ENCODE measurements at regions of chr1 and their contacts with region 1.

Region 1: GRCh38 chr1:34597877-34598514 is 156.9 kb upstream of the GJB5 start:
- DNase-seq: peak; percentile 76 to 86
- H3K4me3 ChIP-seq: no peak overlapping the region
- H3K27ac ChIP-seq: no peak overlapping the region
- H3K4me1 ChIP-seq: no peaks in the 10 kb centered on the region
- H3K27me3 ChIP-seq: peaks cover 0 to 43% (median 4%) of the 10 kb centered on the region in 3 donors
- CTCF ChIP-seq: peak in 4 of 7 experiments; percentile 62 to 78 (median 68)
- EP300 ChIP-seq: no peak
- POLR2A ChIP-seq: no peak

Region 2: GRCh38 chr1:33633019-33633801 is 964.8 kb before region 1 on chr1:
- intact Hi-C with region 1: loop called (anchors 5 kb)
- DNase-seq: peak; percentile 94 to 96
- H3K4me3 ChIP-seq: no peak overlapping the region
- H3K27ac ChIP-seq: no peak overlapping the region
- H3K4me1 ChIP-seq: peaks cover 0 to 10% (median 2%) of the 10 kb centered on the region in 4 donors
- H3K27me3 ChIP-seq: peaks cover 0 to 23% (median 0%) of the 10 kb centered on the region in 3 donors
- CTCF ChIP-seq: peak in 5 of 7 experiments; percentile 61 to 91 (median 86)
- EP300 ChIP-seq: no peak
- POLR2A ChIP-seq: no peak

Region 3: DNA sequence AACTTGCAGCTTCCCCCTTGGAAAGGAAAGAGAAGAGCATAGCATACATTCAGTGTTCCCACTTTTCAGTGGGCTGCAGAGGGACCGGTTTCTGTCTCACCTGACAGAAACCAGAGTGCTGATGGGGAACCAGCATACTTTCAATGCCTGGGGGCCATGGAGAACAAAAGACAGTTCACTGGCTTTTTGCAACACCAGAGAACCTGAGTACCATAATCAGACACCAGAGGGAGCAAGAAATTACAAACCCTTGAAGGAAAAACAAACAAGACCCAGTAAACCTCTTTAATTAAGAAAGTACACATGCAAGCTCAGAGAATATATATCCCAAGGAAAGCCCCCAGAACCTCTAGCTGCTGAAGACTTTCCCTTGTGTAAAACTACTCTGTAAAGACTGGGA is 484.1 kb before region 1 on chr1:
- intact Hi-C with region 1: loop called (anchors 5 kb)
- DNase-seq: peak in 1 of 2 donors; percentile 7
- H3K4me3 ChIP-seq: no peak overlapping the region
- H3K27ac ChIP-seq: no peak overlapping the region
- H3K4me1 ChIP-seq: no peaks in the 10 kb centered on the region
- H3K27me3 ChIP-seq: no peaks in the 10 kb centered on the region
- CTCF ChIP-seq: peak in 2 of 7 experiments; percentile 12 to 15
- EP300 ChIP-seq: no peak
- POLR2A ChIP-seq: no peak

Region 4: GRCh38 chr1:34742667-34743270 is 144.8 kb after region 1 on chr1:
- intact Hi-C with region 1: no loop called
- DNase-seq: peak; percentile 86 to 94
- H3K4me3 ChIP-seq: no peak overlapping the region
- H3K27ac ChIP-seq: no peak overlapping the region
- H3K4me1 ChIP-seq: peaks cover 4 to 10% (median 6%) of the 10 kb centered on the region in 4 donors
- H3K27me3 ChIP-seq: peaks cover 0 to 57% (median 8%) of the 10 kb centered on the region in 3 donors
- CTCF ChIP-seq: peak in 5 of 7 experiments; percentile 46 to 92 (median 84)
- EP300 ChIP-seq: no peak
- POLR2A ChIP-seq: no peak

Region 5: DNA sequence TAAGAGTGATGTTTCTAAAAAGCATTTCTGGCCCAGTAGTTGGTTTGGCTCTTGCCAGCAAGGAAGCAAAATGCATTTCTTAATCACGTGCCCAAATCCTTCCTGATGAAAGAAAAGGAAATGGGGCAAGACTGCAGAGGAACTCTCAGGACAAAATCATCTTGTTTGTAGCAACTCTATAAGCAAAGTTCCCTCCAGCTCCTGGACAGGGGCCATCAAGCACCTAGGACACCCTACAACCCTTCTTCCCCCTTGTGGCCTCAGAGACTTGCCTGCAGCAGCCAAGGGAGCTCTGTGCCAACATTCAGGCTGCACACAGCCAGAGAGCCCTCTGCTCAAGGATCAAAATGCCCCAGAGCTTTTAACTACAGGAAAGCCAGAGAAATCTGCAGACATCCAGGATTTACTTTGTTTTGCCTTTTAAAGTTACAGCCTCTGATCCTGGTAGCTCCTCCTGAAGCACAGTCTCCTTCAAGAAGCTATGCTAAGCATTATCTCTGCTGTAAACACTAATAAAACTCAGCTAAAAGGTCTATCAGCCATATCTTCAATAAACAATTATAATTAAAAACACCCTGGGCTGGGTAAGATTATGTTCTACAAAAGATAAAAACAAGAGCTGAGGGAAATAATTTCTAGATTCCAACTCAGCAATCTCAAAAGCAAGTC is 854.2 kb after region 1 on chr1:
- intact Hi-C with region 1: no loop called
- DNase-seq: peak; percentile 42 to 59
- H3K4me3 ChIP-seq: no peak overlapping the region
- H3K27ac ChIP-seq: peak overlapping the region; percentile 56 to 87 (median 66)
- H3K4me1 ChIP-seq: peaks cover 35 to 77% (median 54%) of the 10 kb centered on the region in 4 donors
- H3K27me3 ChIP-seq: no peaks in the 10 kb centered on the region
- CTCF ChIP-seq: no peak
- EP300 ChIP-seq: no peak
- POLR2A ChIP-seq: no peak

Measured in stomach (tissue), 19 donors.